CD4-positive, alpha-beta memory T cell (primary cell): ENCODE measurements at regions of chr7 and their contacts with region 1.

Region 1: GRCh38 chr7:27196287-27196767 is 3.6 kb downstream of the HOXA13 start:
- DNase-seq: peak; percentile 71 to 79 (median 75)
- H3K4me3 ChIP-seq: no peak overlapping the region
- H3K4me3 Mint-ChIP-seq: peak overlapping the region in 1 of 8 donors; percentile 52
- H3K27ac ChIP-seq: no peak overlapping the region
- H3K27ac Mint-ChIP-seq: peak overlapping the region in 2 of 7 donors; percentile 61 to 74
- H3K4me1 ChIP-seq: peaks cover 45% of the 10 kb centered on the region
- H3K4me1 Mint-ChIP-seq: peaks cover 20 to 54% (median 33%) of the 10 kb centered on the region in 4 donors
- H3K27me3 ChIP-seq: peaks cover 76% of the 10 kb centered on the region
- H3K27me3 Mint-ChIP-seq: peaks cover 65 to 72% of the 10 kb centered on the region in 2 donors

Region 2: GRCh38 chr7:27576360-27576944 is 380.1 kb after region 1 on chr7:
- CTCF ChIA-PET with region 1: interaction called, 26 read pairs
- POLR2A ChIA-PET with region 1: no interaction called
- intact Hi-C with region 1: loop called (anchors 1 kb)
- DNase-seq: peak in 4 of 5 donors; percentile 5 to 31 (median 15)
- H3K4me3 ChIP-seq: no peak overlapping the region
- H3K4me3 Mint-ChIP-seq: no peak overlapping the region
- H3K27ac ChIP-seq: no peak overlapping the region
- H3K27ac Mint-ChIP-seq: no peak overlapping the region
- H3K4me1 ChIP-seq: no peaks in the 10 kb centered on the region
- H3K4me1 Mint-ChIP-seq: peaks cover 0 to 2% (median 0%) of the 10 kb centered on the region in 4 donors
- H3K27me3 ChIP-seq: no peaks in the 10 kb centered on the region
- H3K27me3 Mint-ChIP-seq: no peaks in the 10 kb centered on the region

Region 3: DNA sequence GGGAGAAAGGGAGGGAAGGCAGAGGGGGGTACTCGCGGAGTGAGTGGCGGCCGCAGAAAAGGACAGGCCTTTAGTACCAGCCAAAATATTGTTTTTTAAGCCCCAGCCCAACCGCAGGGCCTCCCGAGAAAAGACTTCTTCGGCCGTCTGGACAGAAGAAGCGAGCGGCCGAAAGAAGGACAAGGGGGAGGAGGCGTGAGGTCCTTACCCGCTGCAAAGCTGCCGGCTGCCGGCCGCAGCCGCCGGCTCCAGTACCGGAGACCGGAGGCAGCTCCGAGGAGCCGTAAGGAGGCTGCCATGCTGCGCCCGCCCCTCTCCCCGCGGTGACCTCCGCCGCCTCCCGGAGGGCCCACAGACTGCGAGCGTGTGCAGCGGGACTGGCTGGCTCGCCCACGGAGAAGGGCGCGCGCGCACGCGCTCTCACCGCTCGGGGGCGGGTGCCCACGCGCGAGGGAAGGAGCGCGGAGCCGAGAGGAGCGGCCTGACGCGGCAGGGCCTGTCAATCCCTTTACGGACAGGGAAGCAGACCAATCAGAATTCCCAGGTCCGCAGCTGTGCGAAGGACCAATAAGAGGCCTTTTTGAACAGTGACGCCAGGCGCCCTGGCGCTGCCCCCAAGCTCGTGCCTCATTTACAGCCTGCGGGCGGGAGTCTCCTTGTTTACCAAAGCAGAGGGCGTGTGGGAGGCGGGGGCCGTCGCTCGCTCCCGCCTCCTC is 466.3 kb after region 1 on chr7 and contains the start of gene HIBADH:
- CTCF ChIA-PET with region 1: no interaction called
- POLR2A ChIA-PET with region 1: no interaction called
- intact Hi-C with region 1: loop called (anchors 5 kb)
- DNase-seq: peak; percentile 96 to 99 (median 98)
- H3K4me3 ChIP-seq: peak within 1 kb of the TSS; percentile 67 to 83
- H3K4me3 Mint-ChIP-seq: peak within 1 kb of the TSS; percentile 82 to 89 (median 87)
- H3K27ac ChIP-seq: peak within 1 kb of the TSS; percentile 69
- H3K27ac Mint-ChIP-seq: peak within 1 kb of the TSS; percentile 89 to 95 (median 93)
- H3K4me1 ChIP-seq: peaks cover 16% of the 10 kb centered on the region
- H3K4me1 Mint-ChIP-seq: peaks cover 10 to 30% (median 18%) of the 10 kb centered on the region in 4 donors
- H3K27me3 ChIP-seq: no peaks in the 10 kb centered on the region
- H3K27me3 Mint-ChIP-seq: peaks cover 0 to 2% of the 10 kb centered on the region in 2 donors
- total RNA-seq, gene HIBADH: 13.6 to 13.7 TPM

Region 4: DNA sequence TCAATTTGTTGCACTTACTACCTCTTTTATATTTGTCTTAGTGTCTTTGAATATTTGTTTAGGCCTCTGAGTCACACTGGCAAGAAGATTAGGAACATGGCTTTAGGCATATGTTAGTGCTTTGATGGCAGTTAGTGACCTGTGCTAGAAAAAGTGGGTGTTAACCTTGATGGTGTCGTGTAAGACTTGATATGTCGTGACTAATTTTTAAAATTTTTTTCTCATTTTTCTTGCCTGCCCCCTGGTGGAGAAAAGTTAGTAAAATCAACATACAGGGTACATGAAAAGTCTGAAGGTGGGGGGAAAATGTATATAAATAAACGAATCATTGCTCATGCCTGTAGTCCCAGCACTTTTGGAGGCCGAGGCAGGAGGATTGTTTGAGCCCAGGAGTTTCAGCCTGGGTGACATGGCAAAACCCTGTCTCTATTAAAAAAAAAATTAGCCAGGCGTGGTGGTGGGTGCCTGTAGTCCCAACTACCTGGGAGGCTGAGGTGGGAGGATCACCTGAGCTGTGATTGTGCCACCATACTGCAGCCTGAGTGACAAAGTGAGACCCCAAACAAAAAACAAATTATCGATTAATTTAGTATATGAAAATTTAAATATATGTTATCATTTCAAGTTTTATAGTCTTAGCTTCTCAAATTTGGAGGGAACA is 588.2 kb after region 1 on chr7:
- CTCF ChIA-PET with region 1: interaction called, 8 read pairs
- POLR2A ChIA-PET with region 1: no interaction called
- intact Hi-C with region 1: loop called (anchors 1 kb)
- DNase-seq: peak; percentile 35 to 52 (median 45)
- H3K4me3 ChIP-seq: no peak overlapping the region
- H3K4me3 Mint-ChIP-seq: no peak overlapping the region
- H3K27ac ChIP-seq: no peak overlapping the region
- H3K27ac Mint-ChIP-seq: peak overlapping the region in 3 of 7 donors; percentile 47 to 77 (median 57)
- H3K4me1 ChIP-seq: no peaks in the 10 kb centered on the region
- H3K4me1 Mint-ChIP-seq: peaks cover 16 to 19% (median 16%) of the 10 kb centered on the region in 4 donors
- H3K27me3 ChIP-seq: no peaks in the 10 kb centered on the region
- H3K27me3 Mint-ChIP-seq: no peaks in the 10 kb centered on the region

Region 5: DNA sequence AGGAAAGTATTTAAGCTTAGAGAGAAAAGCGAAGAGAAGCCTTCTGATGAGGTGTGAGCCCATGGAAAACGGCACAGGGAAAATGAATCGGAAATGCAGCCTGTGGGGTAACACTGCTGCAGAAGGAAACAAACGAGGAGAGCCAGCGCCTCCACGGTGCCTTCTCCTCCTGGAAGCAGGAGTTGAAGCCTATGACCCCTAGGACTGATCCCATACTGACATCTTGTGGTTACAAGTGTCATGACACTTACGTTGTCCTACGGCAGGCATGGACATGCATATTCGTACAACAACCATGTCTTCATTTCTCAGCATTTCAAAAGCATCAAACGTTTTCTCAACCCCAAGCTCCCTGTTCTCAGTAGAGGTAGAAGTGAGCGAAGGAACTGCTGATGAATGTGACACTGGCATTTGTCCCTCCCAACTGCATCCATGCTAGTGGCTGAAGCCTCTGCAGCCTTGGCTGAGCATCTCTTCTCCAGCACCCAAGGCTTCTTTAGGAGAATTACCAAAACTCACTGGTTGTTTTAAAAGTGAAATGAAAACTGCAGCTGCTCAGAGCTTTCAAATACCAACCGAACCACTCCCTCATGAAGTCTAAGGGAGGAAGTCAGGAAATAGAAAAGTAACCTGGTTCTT is 824.1 kb after region 1 on chr7:
- CTCF ChIA-PET with region 1: interaction called, 39 read pairs
- POLR2A ChIA-PET with region 1: no interaction called
- intact Hi-C with region 1: loop called (anchors 1 kb)
- DNase-seq: peak in 4 of 5 donors; percentile 44 to 54 (median 50)
- H3K4me3 ChIP-seq: no peak overlapping the region
- H3K4me3 Mint-ChIP-seq: no peak overlapping the region
- H3K27ac ChIP-seq: no peak overlapping the region
- H3K27ac Mint-ChIP-seq: peak overlapping the region in 1 of 7 donors; percentile 12
- H3K4me1 ChIP-seq: peaks cover 9% of the 10 kb centered on the region
- H3K4me1 Mint-ChIP-seq: peaks cover 8 to 12% (median 8%) of the 10 kb centered on the region in 4 donors
- H3K27me3 ChIP-seq: no peaks in the 10 kb centered on the region
- H3K27me3 Mint-ChIP-seq: no peaks in the 10 kb centered on the region

Region 6: GRCh38 chr7:28083164-28083997 is 887.1 kb after region 1 on chr7:
- CTCF ChIA-PET with region 1: interaction called, 20 read pairs
- POLR2A ChIA-PET with region 1: no interaction called
- intact Hi-C with region 1: loop called (anchors 1 kb)
- DNase-seq: no peak
- H3K4me3 ChIP-seq: no peak overlapping the region
- H3K4me3 Mint-ChIP-seq: no peak overlapping the region
- H3K27ac ChIP-seq: no peak overlapping the region
- H3K27ac Mint-ChIP-seq: peak overlapping the region in 3 of 7 donors; percentile 8 to 87 (median 59)
- H3K4me1 ChIP-seq: no peaks in the 10 kb centered on the region
- H3K4me1 Mint-ChIP-seq: peaks cover 0 to 14% (median 6%) of the 10 kb centered on the region in 4 donors
- H3K27me3 ChIP-seq: no peaks in the 10 kb centered on the region
- H3K27me3 Mint-ChIP-seq: no peaks in the 10 kb centered on the region

Region 7: DNA sequence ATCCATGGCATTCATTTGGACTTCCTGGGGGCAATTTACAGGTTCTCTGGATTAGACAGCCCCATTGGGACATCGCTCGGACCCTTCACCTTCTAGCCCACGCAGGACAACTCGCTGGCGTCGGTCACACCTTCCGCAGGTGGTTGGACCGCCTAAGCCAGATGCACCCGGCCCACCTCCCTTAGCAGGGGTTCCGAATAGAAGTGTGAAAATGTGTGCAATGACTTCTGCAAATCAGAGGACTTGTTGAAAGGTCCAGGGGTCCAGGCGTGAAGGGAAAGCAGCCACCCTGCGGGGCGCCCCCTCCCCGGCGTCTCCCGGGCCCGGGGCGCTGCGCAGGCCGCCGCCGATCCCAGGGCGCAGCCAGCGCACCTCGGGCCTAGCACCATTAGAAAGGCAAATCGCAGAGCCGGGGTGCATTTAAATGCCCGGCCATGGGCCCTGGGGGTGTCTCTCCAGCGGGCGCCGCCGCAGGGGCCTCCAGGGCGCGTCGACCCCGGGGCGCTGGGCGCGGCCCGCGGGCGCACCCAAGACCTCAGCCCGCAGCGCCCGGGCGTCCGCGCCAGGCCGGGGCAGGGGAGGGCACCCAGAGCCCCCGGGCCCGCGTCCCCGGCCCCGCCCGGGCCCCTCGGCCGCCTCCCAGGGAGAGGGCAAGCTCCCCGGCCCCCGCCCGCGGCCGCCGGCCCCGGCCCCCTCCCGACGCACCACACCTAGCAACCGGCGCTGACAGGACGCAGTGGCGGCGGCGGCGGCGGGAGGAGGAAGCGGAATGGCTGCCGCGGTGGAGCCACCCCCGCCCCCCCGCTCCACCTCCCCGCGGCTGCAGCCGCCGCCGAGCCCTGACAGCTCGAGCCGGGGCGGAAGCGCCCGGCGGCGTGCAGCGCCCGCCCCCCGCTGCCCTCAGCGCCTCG is 983.0 kb after region 1 on chr7:
- CTCF ChIA-PET with region 1: no interaction called
- POLR2A ChIA-PET with region 1: no interaction called
- intact Hi-C with region 1: loop called (anchors 10 kb)
- DNase-seq: peak; percentile 70 to 81 (median 75)
- H3K4me3 ChIP-seq: peak overlapping the region; percentile 21 to 56
- H3K4me3 Mint-ChIP-seq: peak overlapping the region; percentile 75 to 90 (median 85)
- H3K27ac ChIP-seq: peak overlapping the region; percentile 1
- H3K27ac Mint-ChIP-seq: peak overlapping the region; percentile 74 to 96 (median 92)
- H3K4me1 ChIP-seq: peaks cover 14% of the 10 kb centered on the region
- H3K4me1 Mint-ChIP-seq: peaks cover 19 to 28% (median 24%) of the 10 kb centered on the region in 4 donors
- H3K27me3 ChIP-seq: no peaks in the 10 kb centered on the region
- H3K27me3 Mint-ChIP-seq: peaks cover 0 to 1% of the 10 kb centered on the region in 2 donors